Sigmoid colon (tissue), 7 donors: ENCODE measurements at regions of chr20 and their contacts with region 1.

Region 1: DNA sequence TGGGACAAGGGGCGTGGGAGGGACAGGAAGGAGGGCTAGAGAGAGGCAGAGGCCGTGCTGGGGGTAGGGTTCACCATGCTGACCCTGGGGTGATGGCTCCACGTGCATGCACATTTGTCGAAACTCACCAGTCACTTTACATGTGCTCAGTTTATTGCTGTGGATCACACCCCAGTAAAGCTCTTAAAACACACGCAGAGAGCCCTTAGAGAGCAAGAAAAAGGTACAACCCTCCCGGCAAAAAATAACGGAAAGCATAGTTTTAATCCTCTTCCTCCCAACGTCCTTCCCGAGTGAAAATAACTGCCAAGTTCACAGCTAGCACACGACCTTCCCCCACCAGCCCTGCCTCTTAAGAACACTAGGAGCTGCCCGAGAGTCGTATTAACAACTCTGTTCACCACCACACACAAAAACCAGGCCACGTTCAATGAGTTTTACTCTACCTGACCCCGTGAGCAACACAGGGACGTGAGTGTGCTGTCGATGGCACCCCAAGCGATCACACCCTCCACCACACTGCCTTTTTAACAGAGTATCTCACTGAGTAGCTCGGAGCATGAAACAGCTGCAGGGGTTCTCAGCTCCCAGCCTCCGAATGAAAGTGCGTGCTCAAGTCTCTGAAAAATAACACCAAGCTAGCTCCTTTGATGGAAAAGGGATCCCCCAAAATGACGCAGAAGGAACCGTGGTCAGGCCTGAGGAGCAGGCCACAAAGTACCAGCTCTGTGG is 39.7 kb downstream of the TAF4 start:
- DNase-seq: no peak
- H3K4me3 ChIP-seq: no peak overlapping the region
- H3K27ac ChIP-seq: peak overlapping the region; percentile 0 to 19 (median 10)
- H3K4me1 ChIP-seq: peaks cover 0 to 41% (median 35%) of the 10 kb centered on the region in 4 donors
- H3K27me3 ChIP-seq: no peaks in the 10 kb centered on the region
- CTCF ChIP-seq: peak; percentile 50 to 73 (median 60)
- EP300 ChIP-seq: no peak
- POLR2A ChIP-seq: no peak

Region 2: GRCh38 chr20:61951695-61952533 is 74.1 kb before region 1 on chr20:
- intact Hi-C with region 1: no loop called
- DNase-seq: peak; percentile 46
- H3K4me3 ChIP-seq: no peak overlapping the region
- H3K27ac ChIP-seq: no peak overlapping the region
- H3K4me1 ChIP-seq: no peaks in the 10 kb centered on the region
- H3K27me3 ChIP-seq: peaks cover 5 to 12% (median 10%) of the 10 kb centered on the region in 3 donors
- CTCF ChIP-seq: no peak
- EP300 ChIP-seq: no peak
- POLR2A ChIP-seq: no peak

Region 3: DNA sequence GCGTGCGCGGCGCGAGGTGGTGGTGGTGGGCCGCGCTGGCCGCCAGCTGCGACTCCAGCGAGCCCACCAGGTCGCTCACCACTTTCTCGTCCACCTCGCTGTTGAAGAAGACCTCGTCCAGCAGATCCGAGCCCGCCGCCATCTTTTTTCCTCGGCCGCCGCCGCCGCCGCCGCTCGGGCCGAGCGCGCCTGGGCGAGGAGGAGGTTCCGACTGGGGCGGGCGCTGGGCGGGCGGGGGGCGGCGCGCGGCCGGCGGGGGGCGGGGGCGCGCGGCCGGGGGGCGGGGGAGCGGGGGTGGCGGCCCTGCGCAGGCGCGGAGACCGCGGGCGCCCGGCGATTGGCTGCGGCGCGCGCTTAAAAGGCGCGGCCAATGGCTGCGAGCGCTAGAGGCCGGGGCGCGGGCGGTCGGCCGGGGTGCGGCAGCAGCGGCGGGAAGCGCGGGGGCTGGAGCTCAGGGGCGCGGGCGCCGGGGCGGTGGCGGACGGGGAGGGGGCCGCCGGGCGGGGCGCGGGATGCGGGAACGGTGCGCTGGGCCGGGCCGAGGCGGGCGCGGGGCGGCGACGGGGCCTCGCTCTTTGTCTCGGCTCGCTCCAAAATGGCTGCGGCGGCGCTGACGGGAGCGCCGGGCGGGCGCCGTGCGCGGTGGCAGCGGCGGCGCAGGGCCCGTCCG is 39.8 kb after region 1 on chr20 and contains the start of gene TAF4:
- intact Hi-C with region 1: loop called (anchors 2 kb)
- DNase-seq: peak; percentile 87
- H3K4me3 ChIP-seq: peak within 1 kb of the TSS; percentile 51 to 73 (median 72)
- H3K27ac ChIP-seq: peak within 1 kb of the TSS; percentile 85 to 91 (median 88)
- H3K4me1 ChIP-seq: peaks cover 0 to 59% (median 49%) of the 10 kb centered on the region in 4 donors
- H3K27me3 ChIP-seq: no peaks in the 10 kb centered on the region
- CTCF ChIP-seq: no peak
- EP300 ChIP-seq: no peak
- POLR2A ChIP-seq: no peak
- total RNA-seq, gene TAF4: 8.0 to 13.3 (median 10.9) TPM

Region 4: GRCh38 chr20:62121776-62122631 is 96.0 kb after region 1 on chr20 and contains the start of gene LSM14B:
- intact Hi-C with region 1: loop called (anchors 5 kb)
- DNase-seq: peak; percentile 98
- H3K4me3 ChIP-seq: peak within 1 kb of the TSS; percentile 76 to 89 (median 87)
- H3K27ac ChIP-seq: peak within 1 kb of the TSS; percentile 91 to 98 (median 97)
- H3K4me1 ChIP-seq: peaks cover 0 to 23% (median 21%) of the 10 kb centered on the region in 4 donors
- H3K27me3 ChIP-seq: peaks cover 0 to 19% (median 0%) of the 10 kb centered on the region in 3 donors
- CTCF ChIP-seq: no peak
- EP300 ChIP-seq: peak in 1 of 4 donors; percentile 25
- POLR2A ChIP-seq: no peak
- total RNA-seq, gene LSM14B: 20.8 to 28.5 (median 23.6) TPM

Region 5: DNA sequence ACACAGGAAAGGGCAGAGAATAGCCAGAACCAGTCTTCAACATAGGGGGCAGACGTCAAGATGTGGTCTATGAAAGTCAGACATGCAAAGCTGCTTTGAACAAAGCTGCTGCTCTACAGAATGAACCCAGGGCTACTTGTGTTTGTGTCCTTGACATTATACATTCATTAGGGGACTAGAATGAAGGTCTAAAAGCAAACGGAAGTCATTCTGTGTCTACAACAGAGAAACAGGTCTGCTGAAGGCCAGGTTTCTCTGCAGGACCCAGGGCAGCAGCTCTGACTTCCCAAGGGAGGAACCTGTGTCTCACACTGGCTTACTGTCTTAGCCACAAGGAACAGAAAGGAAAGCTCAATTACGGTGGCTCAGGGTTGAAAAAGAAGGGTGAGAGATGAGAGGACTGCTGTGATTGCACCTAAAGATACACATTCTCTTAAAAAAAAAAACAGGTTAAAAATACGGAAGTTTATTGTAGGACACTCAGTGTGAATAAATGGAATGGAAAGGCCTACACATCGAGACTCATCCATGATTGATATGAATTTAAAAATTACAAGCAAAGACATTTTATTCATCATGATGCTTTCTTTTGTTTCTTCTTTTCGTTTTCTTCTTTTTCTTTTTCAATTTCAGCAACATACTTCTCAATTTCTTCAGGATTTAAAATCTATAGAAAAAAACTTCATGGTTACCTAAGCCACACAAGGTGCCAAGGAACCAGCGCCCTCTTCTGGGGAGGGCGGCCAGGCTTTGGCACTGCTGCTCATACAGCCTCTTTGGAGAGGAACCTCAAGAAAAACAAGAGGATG is 110.5 kb after region 1 on chr20:
- intact Hi-C with region 1: loop called (anchors 2 kb)
- DNase-seq: no peak
- H3K4me3 ChIP-seq: no peak overlapping the region
- H3K27ac ChIP-seq: peak overlapping the region in 1 of 4 donors; percentile 17
- H3K4me1 ChIP-seq: peaks cover 0 to 27% (median 11%) of the 10 kb centered on the region in 4 donors
- H3K27me3 ChIP-seq: no peaks in the 10 kb centered on the region
- CTCF ChIP-seq: peak; percentile 36 to 79 (median 66)
- EP300 ChIP-seq: no peak
- POLR2A ChIP-seq: no peak